Left cardiac atrium (tissue), 4 donors: ENCODE measurements at regions of chr6 and their contacts with region 1.

Region 1: DNA sequence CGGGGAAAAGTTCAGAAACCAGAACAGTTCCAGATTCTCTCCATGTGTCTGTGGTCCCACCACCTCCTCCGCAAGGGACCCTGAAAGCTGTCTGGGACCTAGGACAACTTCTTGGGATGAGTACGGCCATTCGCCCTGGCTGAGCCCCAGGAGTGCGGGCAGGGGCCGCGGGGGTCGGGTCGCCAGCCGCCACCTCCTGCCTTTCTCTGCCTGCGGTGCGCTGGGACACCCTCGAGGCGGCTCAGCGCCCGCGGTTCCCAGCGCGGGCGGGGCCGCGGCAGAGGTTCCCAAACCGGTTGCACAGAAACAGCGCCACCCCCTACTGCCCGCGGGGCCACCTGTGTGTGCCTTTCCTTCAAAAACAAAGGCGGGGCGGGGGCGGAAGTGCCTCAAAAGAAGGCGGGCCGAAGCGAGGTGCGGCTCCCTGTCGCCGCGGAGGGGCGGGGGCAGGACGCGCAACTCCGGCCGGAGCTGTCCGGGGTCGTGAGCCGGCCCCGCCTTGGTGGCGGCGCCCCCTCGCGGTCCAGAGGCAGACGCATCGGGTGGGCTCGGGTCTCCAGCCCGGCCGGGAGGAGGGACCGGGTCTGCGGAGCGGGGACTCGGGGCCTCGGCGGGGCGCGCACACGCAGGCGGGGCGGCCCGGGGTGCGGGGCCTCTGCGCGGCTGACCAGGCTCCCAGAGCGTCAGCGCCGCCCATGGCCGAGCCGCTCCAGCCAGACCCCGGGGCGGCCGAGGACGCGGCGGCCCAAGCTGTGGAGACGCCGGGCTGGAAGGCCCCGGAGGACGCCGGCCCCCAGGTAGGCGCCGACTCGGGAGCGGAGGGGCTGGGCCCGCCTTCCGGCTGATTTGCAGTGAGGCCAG is at the start of gene HEBP2:
- DNase-seq: peak; percentile 95
- ATAC-seq: peak; percentile 90 to 95
- total RNA-seq, gene HEBP2: 84.9 to 111 TPM

Region 2: GRCh38 chr6:138109042-138109997 is 294.7 kb before region 1 on chr6:
- intact Hi-C with region 1: loop called (anchors 5 to 10 kb)
- DNase-seq: peak; percentile 58
- ATAC-seq: no peak

Region 3: DNA sequence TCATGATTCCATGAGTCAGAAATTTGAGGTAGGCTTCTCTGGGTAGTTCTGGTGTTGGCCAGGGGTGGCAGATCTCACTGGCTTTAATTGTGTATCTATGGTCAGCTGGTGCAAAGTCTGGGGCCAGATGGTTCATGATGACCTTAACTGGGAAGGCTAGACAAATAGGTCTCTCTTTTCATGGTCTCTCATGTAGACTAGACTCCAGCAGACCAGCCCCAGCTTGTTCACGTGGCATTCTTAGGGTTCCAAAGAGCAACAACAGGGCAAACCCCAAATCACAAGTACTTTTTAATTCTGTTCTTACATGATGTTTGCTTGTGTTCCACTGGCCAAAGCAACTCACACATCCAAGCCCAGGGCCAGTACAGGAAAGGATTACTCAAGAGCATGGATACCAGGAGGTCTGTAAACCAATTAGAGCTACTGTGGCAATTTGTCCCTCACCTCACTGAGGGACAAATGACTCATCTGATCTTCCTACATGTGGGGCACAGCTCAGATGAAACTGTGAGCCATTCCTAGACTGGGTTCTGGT is 106.2 kb before region 1 on chr6:
- intact Hi-C with region 1: loop called in 1 of 2 experiments (anchors 5 kb)
- DNase-seq: no peak
- ATAC-seq: no peak